Kidney (tissue), 22 donors: ENCODE measurements at regions of chr3 and their contacts with region 1.

Region 1: DNA sequence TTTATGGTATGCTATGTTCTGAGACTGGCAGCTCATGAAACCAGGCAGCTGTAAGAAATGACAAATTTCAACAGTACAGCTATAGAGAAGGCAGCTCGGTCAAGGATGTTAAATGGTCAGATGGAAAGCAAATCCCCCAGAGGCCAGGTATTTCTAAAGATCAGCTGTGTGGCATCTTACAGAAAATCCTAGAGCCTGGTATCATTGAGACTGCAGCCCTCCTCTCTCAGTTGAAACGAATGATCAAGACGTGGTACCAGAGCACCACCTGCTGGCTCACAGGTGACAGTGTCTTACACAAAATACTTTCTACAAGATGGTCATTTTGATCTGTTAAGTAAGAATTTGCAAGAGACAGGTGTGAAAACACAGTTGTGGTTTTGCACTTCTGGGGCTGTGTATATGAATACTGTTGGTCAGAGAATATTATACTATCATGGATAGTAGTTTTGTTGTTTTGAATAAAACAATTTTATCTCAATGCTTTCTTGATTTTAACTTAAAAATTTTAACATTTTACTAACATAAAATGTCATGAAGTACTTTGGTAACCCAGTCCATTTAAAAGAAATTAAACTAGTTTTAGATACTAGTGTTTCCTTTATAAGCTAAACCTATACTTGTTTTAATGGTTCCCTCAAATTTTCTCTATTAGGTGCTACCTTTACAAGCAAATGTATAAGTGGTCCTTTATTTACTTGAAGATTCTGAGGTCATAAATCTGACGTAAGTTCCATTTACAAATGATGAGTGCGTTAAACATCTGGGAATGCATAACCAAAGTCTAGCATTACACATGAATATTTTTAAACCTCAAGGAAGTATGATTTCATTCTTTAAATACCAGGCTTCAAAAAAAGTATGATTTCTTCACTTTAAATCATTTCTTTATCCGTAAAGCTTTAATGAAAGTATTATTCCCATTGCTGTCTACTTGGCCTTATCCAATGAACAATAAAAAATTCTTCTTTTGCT is 121.8 kb downstream of the PDZRN3 start:
- DNase-seq: peak; percentile 70 to 90 (median 84)
- H3K4me3 ChIP-seq: no peak overlapping the region
- H3K27ac ChIP-seq: no peak overlapping the region
- H3K4me1 ChIP-seq: no peaks in the 10 kb centered on the region
- H3K27me3 ChIP-seq: no peaks in the 10 kb centered on the region
- CTCF ChIP-seq: peak; percentile 95

Region 2: DNA sequence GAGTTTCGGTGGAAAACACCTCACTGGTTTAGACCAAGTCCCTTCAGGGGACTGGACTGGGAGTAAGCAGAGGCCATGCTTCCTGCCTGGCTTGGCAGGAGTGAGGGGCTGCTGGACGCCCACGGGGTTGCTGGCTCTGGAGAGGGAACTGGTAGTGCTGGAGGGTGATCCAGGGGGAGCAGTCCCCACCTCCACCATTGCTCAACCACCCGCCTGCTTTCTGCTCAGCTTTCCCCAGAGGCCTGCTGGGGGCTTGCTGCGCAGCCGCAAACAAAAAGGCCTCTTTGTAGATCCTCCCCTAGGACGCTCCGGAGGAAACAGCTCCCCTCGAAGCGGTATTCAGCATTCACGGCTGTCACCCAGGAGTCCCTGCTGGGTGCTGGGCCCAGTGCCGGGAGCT is 407.9 kb before region 1 on chr3:
- intact Hi-C with region 1: loop called (anchors 5 kb)
- DNase-seq: no peak
- H3K4me3 ChIP-seq: no peak overlapping the region
- H3K27ac ChIP-seq: no peak overlapping the region
- H3K4me1 ChIP-seq: no peaks in the 10 kb centered on the region
- H3K27me3 ChIP-seq: no peaks in the 10 kb centered on the region
- CTCF ChIP-seq: no peak

Region 3: GRCh38 chr3:73245459-73245858 is 257.4 kb before region 1 on chr3:
- intact Hi-C with region 1: no loop called
- DNase-seq: no peak
- H3K4me3 ChIP-seq: no peak overlapping the region
- H3K27ac ChIP-seq: no peak overlapping the region
- H3K4me1 ChIP-seq: no peaks in the 10 kb centered on the region
- H3K27me3 ChIP-seq: no peaks in the 10 kb centered on the region
- CTCF ChIP-seq: no peak

Region 4: GRCh38 chr3:73848173-73848906 is 345.4 kb after region 1 on chr3:
- intact Hi-C with region 1: loop called (anchors 10 kb)
- DNase-seq: peak in 2 of 5 donors; percentile 32 to 41
- H3K4me3 ChIP-seq: no peak overlapping the region
- H3K27ac ChIP-seq: no peak overlapping the region
- H3K4me1 ChIP-seq: no peaks in the 10 kb centered on the region
- H3K27me3 ChIP-seq: no peaks in the 10 kb centered on the region
- CTCF ChIP-seq: peak; percentile 52